Motor neuron (in vitro differentiated cells): ENCODE measurements at regions of chr20 and their contacts with region 1.

Region 1: GRCh38 chr20:23606652-23607049 is 934 bp upstream of the CST9 start:
- ATAC-seq: peak; percentile 87 to 99 (median 96)
- H3K4me3 ChIP-seq: no peak overlapping the region
- H3K27ac ChIP-seq: no peak overlapping the region
- H3K4me1 ChIP-seq: no peaks in the 10 kb centered on the region

Region 2: DNA sequence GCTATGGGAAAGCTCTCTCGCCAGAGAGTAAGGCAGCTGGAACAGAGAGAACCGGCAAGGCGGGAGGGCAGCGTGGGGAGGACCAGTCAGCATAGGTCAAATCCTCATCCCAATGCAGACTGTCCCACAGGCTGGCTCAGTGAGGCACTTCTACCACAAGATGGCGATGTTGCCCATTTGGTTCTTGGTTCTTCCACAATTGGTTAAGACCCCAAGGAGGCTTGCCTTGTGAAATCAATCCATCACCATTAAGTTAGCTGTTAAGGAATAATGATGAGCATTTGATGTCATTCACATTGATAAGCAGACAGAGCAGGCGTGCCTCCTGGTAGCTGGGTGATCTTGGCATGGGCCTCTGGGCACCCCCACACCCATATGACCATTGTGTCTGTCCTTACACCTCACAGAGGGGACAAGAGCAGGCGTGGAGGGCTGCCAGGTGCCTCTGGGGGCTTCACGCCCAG is 164.8 kb before region 1 on chr20:
- in situ Hi-C with region 1: loop called in 4 of 9 experiments (anchors 10 to 25 kb)
- ATAC-seq: peak; percentile 86 to 97 (median 96)
- H3K4me3 ChIP-seq: no peak overlapping the region
- H3K27ac ChIP-seq: no peak overlapping the region
- H3K4me1 ChIP-seq: no peaks in the 10 kb centered on the region